Brain microvascular endothelial cell (primary cell): ENCODE measurements at regions of chr15 and their contacts with region 1.

Region 1: DNA sequence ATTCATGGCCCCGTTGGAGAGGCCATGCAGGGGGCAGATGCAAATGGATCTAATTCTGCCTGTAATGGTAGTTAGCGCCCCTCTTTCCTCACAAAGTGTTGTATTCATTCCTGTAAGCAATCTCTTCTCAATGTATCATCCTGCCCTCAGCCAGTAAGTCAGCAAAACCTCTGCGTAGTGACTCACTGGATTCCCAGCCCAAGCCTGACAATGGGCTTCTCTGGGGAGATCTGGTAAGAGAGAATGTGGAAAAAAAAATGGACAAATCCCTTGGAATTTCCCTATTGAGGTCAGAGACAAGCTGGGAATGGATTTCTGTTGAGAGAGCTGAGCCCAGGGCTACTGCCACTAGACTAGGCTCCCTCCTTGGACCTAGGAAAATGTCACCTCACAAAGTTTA is 25.4 kb downstream of the ADPGK start:
- DNase-seq: peak; percentile 91
- H3K4me3 ChIP-seq: no peak overlapping the region
- H3K27ac ChIP-seq: peak overlapping the region; percentile 82
- H3K27me3 ChIP-seq: no peaks in the 10 kb centered on the region
- CTCF ChIP-seq: no peak

Region 2: GRCh38 chr15:71761649-71762369 is 996.4 kb before region 1 on chr15:
- in situ Hi-C with region 1: no loop called
- DNase-seq: peak; percentile 74
- H3K4me3 ChIP-seq: no peak overlapping the region
- H3K27ac ChIP-seq: peak overlapping the region; percentile 18
- H3K27me3 ChIP-seq: no peaks in the 10 kb centered on the region
- CTCF ChIP-seq: no peak

Region 3: DNA sequence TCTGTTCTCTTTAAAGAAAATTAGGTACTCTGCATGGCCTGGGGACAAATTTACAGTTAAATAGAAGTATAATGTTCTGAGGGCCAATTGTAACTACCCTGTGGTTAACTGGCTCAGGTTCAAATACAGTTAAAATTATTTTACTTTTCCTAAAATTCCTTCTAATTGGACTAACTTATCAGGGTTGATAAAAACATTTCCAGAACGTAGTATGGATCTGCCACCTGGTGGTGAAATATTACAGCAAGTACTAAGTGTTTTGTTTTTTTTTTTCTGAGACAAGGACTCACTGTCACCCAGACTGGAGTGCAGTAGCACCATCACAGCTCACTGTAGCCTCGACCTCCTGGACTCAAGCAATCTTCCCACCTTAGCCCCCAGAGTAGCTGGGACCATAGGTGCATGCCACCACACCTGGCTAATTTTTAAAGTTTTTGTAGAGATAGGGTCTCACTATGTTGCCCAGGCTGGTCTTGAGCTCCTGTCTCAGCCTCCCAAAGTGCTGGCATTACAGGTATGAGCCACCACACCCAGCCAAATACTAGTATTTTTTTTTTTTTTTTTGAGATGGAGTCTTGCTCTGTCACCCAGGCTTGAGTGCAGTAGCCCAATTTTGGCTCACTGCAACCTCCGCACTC is 323.3 kb after region 1 on chr15:
- in situ Hi-C with region 1: loop called (anchors 25 kb)
- DNase-seq: peak; percentile 30
- H3K4me3 ChIP-seq: no peak overlapping the region
- H3K27ac ChIP-seq: no peak overlapping the region
- H3K27me3 ChIP-seq: no peaks in the 10 kb centered on the region
- CTCF ChIP-seq: peak; percentile 60